ENCODE measurements at regions of chr18 and their contacts with region 1.

Region 1: DNA sequence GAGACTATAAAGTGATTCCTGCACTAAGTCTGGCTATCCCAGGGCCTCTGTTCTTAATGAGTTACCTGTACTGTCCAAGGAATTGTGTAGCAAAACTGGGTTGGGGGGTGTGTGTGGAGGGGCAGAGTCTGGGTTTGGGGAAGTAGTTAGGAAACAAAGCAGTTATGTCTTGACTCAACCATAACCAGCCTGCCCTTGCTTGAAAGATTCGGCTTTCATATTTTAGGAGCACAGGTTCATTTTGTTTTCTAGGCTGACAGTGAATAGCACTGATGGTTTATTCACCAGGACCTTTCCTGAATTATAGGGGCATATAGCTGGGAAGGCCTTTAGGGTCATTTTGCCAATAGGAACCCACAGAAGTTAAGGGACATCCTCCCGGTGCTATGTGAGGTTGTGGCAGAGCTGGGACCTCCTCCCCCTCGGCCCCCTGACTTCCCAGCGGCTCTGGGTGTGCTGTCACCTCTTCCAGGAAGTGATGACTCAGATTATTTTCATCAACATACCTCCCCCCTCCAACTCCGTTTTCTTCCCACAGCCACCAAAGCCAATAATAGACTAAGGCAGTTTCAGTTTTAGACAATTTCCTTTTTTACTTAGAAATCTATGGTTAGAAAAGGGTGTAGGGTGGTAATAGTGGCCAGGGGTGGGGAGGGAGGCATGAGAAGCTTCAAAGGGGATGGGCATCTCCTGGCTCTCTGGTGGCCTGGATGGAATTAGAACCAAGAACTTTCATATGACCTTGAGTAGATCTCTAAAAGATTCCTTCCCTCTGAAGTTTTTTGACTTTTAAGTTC is 44.8 kb downstream of the SETBP1 start:
- DNase-seq: peak; percentile 16 to 86 (median 64)
- ATAC-seq: peak; percentile 73
- H3K4me3 ChIP-seq: no peak overlapping the region
- H3K4me3 Mint-ChIP-seq: peak overlapping the region; percentile 53
- H3K27ac ChIP-seq: peak overlapping the region in 1 of 2 experiments; percentile 77
- H3K27ac Mint-ChIP-seq: peak overlapping the region; percentile 74
- H3K4me1 ChIP-seq: peaks cover 23% of the 10 kb centered on the region
- H3K4me1 Mint-ChIP-seq: peaks cover 61% of the 10 kb centered on the region
- H3K27me3 ChIP-seq: no peaks in the 10 kb centered on the region
- H3K27me3 Mint-ChIP-seq: no peaks in the 10 kb centered on the region
- CTCF ChIP-seq: no peak

Region 2: DNA sequence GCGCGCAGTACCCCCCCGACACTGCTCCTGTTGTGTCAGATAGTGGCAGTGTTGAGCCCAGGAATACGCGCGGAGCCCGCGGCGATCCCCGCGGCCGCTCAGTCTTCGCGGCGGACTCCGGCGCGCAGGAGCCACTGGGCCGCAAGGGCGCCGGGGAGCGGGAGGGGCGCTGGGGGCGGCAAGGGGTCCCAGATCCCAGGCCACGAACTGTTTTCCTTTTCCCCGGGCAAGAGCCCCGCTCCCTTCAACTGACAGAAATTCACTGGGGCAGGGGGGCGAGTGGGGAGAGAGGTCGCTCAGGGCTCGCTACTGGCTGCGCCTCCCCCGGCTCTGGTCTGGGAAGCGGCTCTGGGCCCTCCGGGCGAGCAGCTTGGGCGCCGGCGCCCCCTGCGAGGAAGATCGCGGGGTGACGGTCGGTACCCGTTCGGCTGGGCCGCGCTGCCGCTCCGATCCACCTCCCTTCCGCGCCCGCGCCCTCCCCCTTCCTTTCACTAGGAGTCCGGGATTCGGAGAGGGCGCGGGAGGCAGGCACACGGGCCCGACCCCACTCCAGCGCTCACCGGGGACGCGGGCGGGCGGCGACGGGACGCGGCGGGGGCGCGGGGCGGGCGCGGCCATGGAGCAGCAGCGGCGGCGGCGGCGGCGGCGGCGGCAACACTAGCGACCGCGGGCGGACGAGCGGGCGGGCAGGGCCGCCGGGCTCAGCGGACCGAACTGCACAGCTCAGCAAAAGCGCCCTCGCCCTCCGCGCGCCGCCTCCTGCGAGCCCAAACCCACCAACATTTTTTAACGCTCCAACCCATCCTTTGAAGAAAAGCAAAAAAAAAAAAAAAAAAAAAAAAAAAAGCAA is 46.2 kb before region 1 on chr18:
- CTCF ChIA-PET with region 1: no interaction called
- POLR2A ChIA-PET with region 1: no interaction called
- intact Hi-C with region 1: loop called in 1 of 2 experiments (anchors 5 kb)
- DNase-seq: peak; percentile 18 to 88 (median 65)
- ATAC-seq: peak; percentile 88
- H3K4me3 ChIP-seq: peak overlapping the region; percentile 54 to 67
- H3K4me3 Mint-ChIP-seq: peak overlapping the region; percentile 85
- H3K27ac ChIP-seq: peak overlapping the region; percentile 44 to 67
- H3K27ac Mint-ChIP-seq: no peak overlapping the region
- H3K4me1 ChIP-seq: peaks cover 4% of the 10 kb centered on the region
- H3K4me1 Mint-ChIP-seq: peaks cover 7% of the 10 kb centered on the region
- H3K27me3 ChIP-seq: no peaks in the 10 kb centered on the region
- H3K27me3 Mint-ChIP-seq: peaks cover 15% of the 10 kb centered on the region
- CTCF ChIP-seq: peak; percentile 50

Region 3: GRCh38 chr18:44742704-44743311 is 17.3 kb after region 1 on chr18:
- CTCF ChIA-PET with region 1: no interaction called
- POLR2A ChIA-PET with region 1: no interaction called
- intact Hi-C with region 1: no loop called
- DNase-seq: no peak
- ATAC-seq: no peak
- H3K4me3 ChIP-seq: no peak overlapping the region
- H3K4me3 Mint-ChIP-seq: no peak overlapping the region
- H3K27ac ChIP-seq: no peak overlapping the region
- H3K27ac Mint-ChIP-seq: no peak overlapping the region
- H3K4me1 ChIP-seq: no peaks in the 10 kb centered on the region
- H3K4me1 Mint-ChIP-seq: no peaks in the 10 kb centered on the region
- H3K27me3 ChIP-seq: no peaks in the 10 kb centered on the region
- H3K27me3 Mint-ChIP-seq: no peaks in the 10 kb centered on the region
- CTCF ChIP-seq: no peak

Region 4: GRCh38 chr18:45303026-45303425 is 577.5 kb after region 1 on chr18:
- CTCF ChIA-PET with region 1: no interaction called
- POLR2A ChIA-PET with region 1: no interaction called
- intact Hi-C with region 1: no loop called
- DNase-seq: no peak
- ATAC-seq: no peak
- H3K4me3 ChIP-seq: no peak overlapping the region
- H3K4me3 Mint-ChIP-seq: no peak overlapping the region
- H3K27ac ChIP-seq: no peak overlapping the region
- H3K27ac Mint-ChIP-seq: no peak overlapping the region
- H3K4me1 ChIP-seq: no peaks in the 10 kb centered on the region
- H3K4me1 Mint-ChIP-seq: no peaks in the 10 kb centered on the region
- H3K27me3 ChIP-seq: no peaks in the 10 kb centered on the region
- H3K27me3 Mint-ChIP-seq: peaks cover 2% of the 10 kb centered on the region
- CTCF ChIP-seq: no peak